ENCODE measurements at regions of chr16 and their contacts with region 1.

Region 1: DNA sequence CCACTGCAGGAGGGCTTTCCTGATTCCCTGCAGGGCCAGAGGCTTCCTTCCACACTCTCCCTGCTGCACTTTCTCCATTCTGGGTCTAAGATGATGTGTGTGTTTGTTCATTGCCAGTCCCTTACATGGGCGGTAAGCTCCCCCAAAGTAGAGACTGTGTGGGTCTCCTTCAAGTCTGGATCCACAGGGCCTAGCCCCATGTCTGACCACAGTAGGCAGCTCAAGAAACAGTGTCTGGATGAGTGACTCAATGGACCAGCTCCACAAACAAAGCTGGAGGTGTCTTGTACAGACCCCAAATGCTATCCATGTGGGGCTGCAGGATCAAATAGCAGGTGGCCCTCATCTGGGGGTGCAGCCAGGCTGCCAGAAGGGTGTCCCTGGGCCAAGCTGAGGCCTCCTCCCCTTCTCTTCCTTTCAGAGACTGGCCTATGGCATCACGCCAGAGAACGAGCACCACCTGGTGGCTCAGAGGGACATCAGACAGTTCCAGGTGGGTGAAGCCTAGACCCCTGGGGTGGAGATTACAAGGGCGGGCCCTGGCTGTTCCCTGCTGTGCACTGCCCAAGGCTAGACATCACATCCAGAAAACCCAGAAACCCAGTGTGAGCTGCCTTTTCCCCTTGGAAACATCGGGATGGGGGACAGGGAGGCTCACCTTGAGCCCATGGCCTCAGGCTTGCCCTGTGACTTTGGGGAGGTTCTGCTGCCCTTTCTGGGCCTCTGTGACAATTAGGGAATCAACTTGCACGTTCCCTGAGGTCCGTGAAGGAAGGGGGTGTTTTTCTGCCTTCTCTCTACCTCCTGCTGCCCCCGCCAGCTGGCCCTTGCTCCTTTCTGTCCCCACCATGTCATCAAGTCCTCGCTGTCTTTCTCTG is 45.9 kb downstream of the SLC6A2 start:
- DNase-seq: peak; percentile 72
- ATAC-seq: peak; percentile 74 to 78
- H3K4me3 ChIP-seq: no peak overlapping the region
- H3K27ac ChIP-seq: no peak overlapping the region
- H3K4me1 ChIP-seq: no peaks in the 10 kb centered on the region
- H3K27me3 ChIP-seq: no peaks in the 10 kb centered on the region
- CTCF ChIP-seq: peak; percentile 65

Region 2: GRCh38 chr16:55465077-55465896 is 236.4 kb before region 1 on chr16:
- intact Hi-C with region 1: loop called (anchors 10 kb)
- DNase-seq: peak; percentile 91
- ATAC-seq: peak; percentile 94 to 97
- H3K4me3 ChIP-seq: no peak overlapping the region
- H3K27ac ChIP-seq: no peak overlapping the region
- H3K4me1 ChIP-seq: no peaks in the 10 kb centered on the region
- H3K27me3 ChIP-seq: no peaks in the 10 kb centered on the region
- CTCF ChIP-seq: peak; percentile 100